ENCODE measurements at regions of chr1 and their contacts with region 1.

Region 1: DNA sequence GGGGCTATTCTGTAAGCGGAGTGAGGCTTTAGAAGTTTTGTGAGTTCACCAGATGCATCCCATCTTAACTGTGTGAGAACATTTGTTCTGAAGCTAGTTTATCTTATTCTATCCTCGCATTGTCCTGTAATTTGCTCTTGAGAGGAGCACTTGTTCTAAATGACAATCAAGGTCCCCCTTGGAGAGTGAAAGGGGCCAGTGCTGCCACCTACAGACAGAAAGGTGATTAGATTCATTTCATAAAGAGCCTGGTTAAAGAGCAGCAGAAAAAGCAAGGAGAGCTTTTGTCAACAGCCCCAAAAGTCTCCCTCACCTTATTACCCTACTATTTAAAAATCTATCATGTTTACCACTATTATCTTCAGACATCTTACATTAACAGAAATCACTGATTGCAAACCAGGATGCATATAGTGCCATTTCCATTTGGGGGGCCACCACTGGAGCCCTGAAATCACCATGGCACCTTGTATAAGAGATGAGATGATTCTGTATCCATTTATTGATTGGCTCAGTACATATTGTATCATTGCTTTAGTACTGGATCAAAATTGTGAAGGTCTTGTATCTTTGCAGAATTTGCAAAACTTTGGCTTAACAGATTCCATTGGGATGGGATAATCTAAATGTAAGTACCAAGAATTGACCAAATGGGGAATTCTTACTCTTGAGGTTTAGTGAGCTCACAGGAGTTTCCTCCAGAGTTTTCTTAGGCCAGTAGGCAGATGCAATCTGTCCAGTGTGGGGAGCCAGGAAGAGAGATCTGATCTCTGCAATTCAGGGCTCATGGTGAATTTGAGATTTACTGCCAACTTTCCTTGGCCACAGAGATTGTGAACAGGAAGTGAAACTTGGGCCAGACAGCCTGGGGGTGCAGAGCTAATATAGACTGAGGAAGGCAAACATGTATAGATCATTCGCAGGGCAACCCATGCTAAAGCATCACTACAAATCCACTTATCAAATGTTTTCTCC is 64.3 kb upstream of the TRABD2B start:
- DNase-seq: no peak
- H3K4me3 ChIP-seq: no peak overlapping the region
- H3K27ac ChIP-seq: no peak overlapping the region
- H3K4me1 ChIP-seq: peaks cover 0 to 13% (median 0%) of the 10 kb centered on the region in 3 donors
- H3K27me3 ChIP-seq: peaks cover 0 to 55% (median 0%) of the 10 kb centered on the region in 4 donors
- CTCF ChIP-seq: peak; percentile 18 to 72 (median 66)
- POLR2A ChIP-seq: no peak

Region 2: GRCh38 chr1:47738560-47739182 is 322.8 kb before region 1 on chr1:
- intact Hi-C with region 1: loop called (anchors 10 kb)
- DNase-seq: no peak
- H3K4me3 ChIP-seq: no peak overlapping the region
- H3K27ac ChIP-seq: no peak overlapping the region
- H3K4me1 ChIP-seq: peaks cover 0 to 7% (median 6%) of the 10 kb centered on the region in 3 donors
- H3K27me3 ChIP-seq: peaks cover 0 to 33% (median 0%) of the 10 kb centered on the region in 4 donors
- CTCF ChIP-seq: peak; percentile 55 to 80 (median 70)
- POLR2A ChIP-seq: no peak

Region 3: GRCh38 chr1:47997289-47998200 is 63.9 kb before region 1 on chr1 and contains the start of gene TRABD2B:
- intact Hi-C with region 1: loop called (anchors 5 kb)
- DNase-seq: no peak
- H3K4me3 ChIP-seq: peak within 1 kb of the TSS; percentile 38 to 84 (median 58)
- H3K27ac ChIP-seq: peak within 1 kb of the TSS; percentile 52 to 93 (median 83)
- H3K4me1 ChIP-seq: peaks cover 2 to 64% (median 8%) of the 10 kb centered on the region in 3 donors
- H3K27me3 ChIP-seq: peaks cover 0 to 85% (median 2%) of the 10 kb centered on the region in 4 donors
- CTCF ChIP-seq: peak; percentile 90 to 97 (median 94)
- POLR2A ChIP-seq: peak in 1 of 4 donors; percentile 14
- total RNA-seq, gene TRABD2B: 0.26 to 1.7 (median 0.50) TPM

Measured in esophagus squamous epithelium (tissue), 5 donors.